ENCODE measurements at regions of chr10 and their contacts with region 1.

Region 1: DNA sequence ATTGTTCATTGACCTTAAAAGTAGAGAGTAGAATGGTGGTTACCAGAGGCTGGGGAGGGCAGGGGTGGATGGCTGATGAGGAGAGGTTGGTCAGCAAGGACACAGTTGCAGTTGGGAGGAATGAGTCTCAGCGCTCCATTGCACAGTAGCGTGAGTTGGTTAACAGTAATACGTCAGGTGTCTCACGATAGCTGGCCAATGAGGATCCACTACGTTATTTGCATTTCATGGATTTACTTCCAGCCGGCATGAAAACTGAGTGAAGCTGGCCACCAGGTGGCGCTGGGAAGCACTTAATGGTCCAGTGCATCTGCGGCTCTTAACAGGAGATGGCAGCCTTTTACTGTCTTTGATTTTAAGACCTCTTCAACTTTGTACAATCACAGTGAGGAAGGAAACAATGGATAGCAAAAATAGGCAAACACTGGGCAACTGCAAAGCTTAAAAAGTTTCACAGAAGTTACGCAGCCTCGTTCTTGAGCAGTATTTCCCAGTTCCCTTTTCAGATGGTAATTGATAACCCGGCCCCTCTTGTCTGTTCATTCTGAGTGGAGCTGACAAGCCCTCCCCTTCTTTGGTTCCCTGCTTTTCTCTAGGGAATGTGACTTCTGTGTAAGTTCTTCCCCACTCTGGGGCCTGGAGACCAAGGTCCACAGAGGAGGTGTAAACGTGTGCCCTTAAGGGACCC is 23.7 kb downstream of the AKR1E2 start:
- DNase-seq: peak; percentile 95
- H3K4me3 Mint-ChIP-seq: no peak overlapping the region
- H3K27ac Mint-ChIP-seq: peak overlapping the region; percentile 49
- H3K4me1 Mint-ChIP-seq: peaks cover 29% of the 10 kb centered on the region
- H3K27me3 Mint-ChIP-seq: no peaks in the 10 kb centered on the region
- CTCF ChIP-seq: peak; percentile 99

Region 2: DNA sequence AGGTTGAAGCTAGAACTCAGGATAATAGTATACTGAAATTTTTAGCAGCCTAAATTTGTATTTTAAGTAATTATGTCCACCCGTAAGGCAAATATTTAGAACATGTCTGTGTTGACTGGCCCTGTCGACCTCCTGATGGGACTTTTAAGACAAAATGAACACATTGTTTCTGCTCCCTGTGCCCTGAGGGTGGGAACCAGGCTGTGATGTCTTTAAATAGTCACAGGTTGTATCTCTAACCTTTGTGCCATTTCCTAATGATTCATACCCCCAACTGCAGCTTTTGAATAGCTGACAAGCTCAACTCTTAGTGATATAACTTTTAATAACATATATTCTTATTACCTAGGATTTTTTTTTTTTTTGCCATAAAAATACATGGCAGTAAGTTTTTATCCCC is 518.6 kb before region 1 on chr10:
- CTCF ChIA-PET with region 1: no interaction called
- POLR2A ChIA-PET with region 1: no interaction called
- intact Hi-C with region 1: no loop called
- DNase-seq: peak; percentile 33
- H3K4me3 Mint-ChIP-seq: no peak overlapping the region
- H3K27ac Mint-ChIP-seq: no peak overlapping the region
- H3K4me1 Mint-ChIP-seq: no peaks in the 10 kb centered on the region
- H3K27me3 Mint-ChIP-seq: no peaks in the 10 kb centered on the region
- CTCF ChIP-seq: no peak

Region 3: DNA sequence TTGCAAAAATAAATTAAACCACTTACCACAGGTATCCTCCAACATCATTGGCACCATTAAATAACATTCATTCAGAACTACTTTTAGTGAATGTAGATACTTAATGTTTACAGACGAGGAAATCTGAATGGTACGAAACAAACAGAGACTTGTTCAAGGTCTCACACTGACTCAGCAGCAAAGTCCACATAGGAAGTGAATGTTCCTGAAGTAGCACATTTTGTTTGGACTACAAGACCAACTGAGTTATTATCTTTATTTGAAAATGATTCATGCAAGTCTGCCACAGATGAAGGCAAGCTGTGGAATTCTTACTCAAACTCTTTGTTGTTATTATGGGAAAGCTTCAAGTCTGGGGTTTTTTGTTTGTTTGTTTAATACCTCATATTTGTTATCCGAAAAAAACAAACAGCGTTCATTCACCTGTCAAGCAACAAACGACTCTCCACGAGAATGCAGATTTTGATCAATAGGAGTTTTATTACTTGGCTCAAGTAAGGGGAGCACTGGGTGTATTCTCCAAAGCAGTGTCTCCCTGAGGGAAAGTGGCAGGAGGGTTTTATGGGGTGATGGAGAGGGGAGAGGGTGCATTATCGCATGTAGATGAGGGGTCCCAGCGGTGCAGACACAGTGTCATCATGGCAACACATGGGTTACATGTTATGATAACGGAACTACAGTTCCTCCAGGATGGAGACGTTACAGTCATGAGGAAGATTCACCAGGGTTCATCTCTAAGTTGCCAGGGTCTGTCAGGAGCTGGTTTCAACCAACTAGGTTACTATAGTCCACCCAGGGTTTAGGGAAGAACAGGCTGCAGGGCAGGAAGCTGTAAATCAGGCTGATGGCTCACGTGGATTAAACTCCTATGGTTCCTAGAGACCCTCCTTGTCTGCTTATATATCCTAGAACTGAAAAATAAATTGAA is 171.4 kb before region 1 on chr10:
- CTCF ChIA-PET with region 1: no interaction called
- POLR2A ChIA-PET with region 1: no interaction called
- intact Hi-C with region 1: no loop called
- DNase-seq: peak; percentile 81
- H3K4me3 Mint-ChIP-seq: peak overlapping the region; percentile 58
- H3K27ac Mint-ChIP-seq: peak overlapping the region; percentile 90
- H3K4me1 Mint-ChIP-seq: peaks cover 33% of the 10 kb centered on the region
- H3K27me3 Mint-ChIP-seq: no peaks in the 10 kb centered on the region
- CTCF ChIP-seq: no peak

Region 4: DNA sequence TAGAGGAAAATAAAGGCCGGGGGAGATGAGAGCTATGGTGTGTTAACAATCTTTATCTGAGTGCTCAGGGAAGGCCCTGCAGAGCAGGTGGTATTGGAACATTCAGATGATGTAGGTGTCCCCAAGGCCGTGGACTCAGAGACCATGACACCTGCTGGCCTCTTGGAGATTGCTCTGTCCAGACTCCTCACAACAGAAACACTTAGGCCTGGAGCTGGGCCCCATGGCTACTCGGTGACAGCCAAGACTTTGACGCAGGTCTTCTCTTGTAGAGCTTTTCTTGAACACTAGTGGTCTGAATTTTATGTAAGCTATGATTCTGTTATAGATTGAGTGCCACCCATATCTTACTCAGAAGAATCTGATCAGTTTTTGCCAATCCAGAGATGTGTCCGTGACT is 10.3 kb before region 1 on chr10:
- CTCF ChIA-PET with region 1: interaction called, 54 read pairs
- POLR2A ChIA-PET with region 1: interaction called, 4 read pairs
- intact Hi-C with region 1: no loop called
- DNase-seq: no peak
- H3K4me3 Mint-ChIP-seq: no peak overlapping the region
- H3K27ac Mint-ChIP-seq: no peak overlapping the region
- H3K4me1 Mint-ChIP-seq: no peaks in the 10 kb centered on the region
- H3K27me3 Mint-ChIP-seq: no peaks in the 10 kb centered on the region
- CTCF ChIP-seq: no peak

Region 5: GRCh38 chr10:4941540-4942330 is 92.0 kb after region 1 on chr10:
- CTCF ChIA-PET with region 1: interaction called, 17 read pairs
- POLR2A ChIA-PET with region 1: interaction called, 4 read pairs
- intact Hi-C with region 1: loop called (anchors 1 kb)
- DNase-seq: peak; percentile 59
- H3K4me3 Mint-ChIP-seq: no peak overlapping the region
- H3K27ac Mint-ChIP-seq: peak overlapping the region; percentile 80
- H3K4me1 Mint-ChIP-seq: peaks cover 75% of the 10 kb centered on the region
- H3K27me3 Mint-ChIP-seq: no peaks in the 10 kb centered on the region
- CTCF ChIP-seq: no peak

Region 6: DNA sequence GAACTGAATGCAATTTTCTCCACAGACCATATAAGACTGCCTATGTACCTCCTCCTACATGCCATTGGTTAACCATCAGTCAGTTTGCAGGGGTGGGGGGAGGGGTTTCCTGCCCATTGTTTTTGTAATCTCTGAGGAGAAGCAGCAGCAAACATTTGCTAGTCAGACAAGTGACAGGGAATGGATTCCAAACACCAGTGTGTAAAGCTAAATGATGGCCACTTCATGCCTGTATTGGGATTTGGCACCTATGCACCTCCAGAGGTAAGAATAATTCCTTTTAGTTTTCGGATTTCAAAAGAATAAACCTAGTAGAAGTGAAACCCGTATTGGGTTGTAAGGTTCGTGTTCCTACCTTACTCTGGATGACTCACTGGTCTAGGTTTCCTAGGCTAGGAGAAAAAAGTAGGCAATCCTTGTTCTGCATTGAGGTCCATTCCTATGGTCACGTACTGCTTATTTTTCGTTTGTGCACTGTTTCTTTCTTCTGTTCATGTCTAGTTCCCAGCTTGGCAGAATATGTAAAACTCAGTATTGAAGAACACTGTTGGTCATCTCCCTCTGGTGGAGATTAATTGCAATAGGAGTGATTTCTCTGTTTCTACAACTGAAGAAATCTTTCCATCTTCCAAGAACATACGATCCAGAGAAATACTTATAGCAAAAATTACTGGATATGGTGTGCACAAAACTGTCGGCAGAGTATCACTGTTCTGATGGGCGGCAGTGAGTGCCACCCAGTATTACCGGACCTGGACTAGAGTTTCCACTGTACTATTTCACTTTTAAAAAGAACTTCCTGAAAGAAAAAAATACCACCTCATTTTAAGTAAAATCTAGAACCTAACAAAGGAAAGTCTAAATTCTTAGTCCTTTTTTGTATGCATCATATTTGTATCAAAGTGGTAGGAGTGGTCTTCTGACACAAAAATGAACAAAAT is 244.8 kb after region 1 on chr10 and contains the start of gene AKR1C3:
- CTCF ChIA-PET with region 1: interaction called, 29 read pairs
- POLR2A ChIA-PET with region 1: interaction called, 26 read pairs
- intact Hi-C with region 1: loop called (anchors 1 kb)
- DNase-seq: peak; percentile 84
- H3K4me3 Mint-ChIP-seq: peak within 1 kb of the TSS; percentile 87
- H3K27ac Mint-ChIP-seq: peak within 1 kb of the TSS; percentile 88
- H3K4me1 Mint-ChIP-seq: peaks cover 20% of the 10 kb centered on the region
- H3K27me3 Mint-ChIP-seq: no peaks in the 10 kb centered on the region
- CTCF ChIP-seq: peak; percentile 43
- total RNA-seq, gene AKR1C3: 22.0 and 22.9 TPM in 2 replicates

Region 7: DNA sequence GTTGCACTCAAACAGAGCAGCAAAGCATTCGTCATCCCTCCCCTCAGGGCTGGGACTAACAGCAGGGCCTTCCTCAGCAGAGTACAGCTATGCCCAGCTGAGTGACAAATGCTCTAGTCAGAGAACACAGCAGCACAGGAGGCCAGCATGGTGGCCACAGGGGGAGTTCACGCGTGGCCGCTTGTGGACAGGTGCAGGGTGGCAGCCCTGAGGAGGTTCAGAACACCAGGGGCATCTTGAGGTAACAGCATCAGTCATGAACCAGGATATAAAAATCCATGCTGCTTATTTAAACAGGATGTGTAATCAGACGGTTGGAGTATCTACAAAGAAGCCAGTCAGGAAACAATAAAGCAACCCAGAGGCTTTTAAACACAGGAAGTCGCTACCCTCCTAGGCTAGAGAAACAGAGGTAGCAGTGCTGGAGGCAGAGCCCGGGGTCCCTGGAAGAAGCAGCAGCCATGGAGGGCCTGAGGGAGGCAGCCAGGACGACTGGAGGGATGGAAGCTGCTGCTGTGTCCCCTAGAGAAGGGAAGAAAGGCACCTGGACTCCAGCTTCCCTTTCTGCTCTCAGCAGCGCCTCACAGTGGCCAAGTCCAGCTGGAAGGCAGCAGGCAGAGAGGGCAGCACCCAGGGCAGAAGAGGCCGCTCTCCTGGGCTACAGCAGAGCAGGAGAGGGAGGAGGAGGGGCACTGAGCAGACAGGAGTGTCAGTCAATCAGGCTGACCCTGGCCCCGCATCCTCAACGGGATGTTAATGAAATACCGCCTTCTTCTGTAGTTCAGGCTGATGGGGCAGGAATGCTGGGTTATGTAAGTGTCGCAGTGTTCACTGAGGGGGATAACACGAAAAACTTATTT is 444.2 kb after region 1 on chr10:
- CTCF ChIA-PET with region 1: interaction called, 12 read pairs
- POLR2A ChIA-PET with region 1: no interaction called
- intact Hi-C with region 1: no loop called
- DNase-seq: peak; percentile 86
- H3K4me3 Mint-ChIP-seq: peak overlapping the region; percentile 48
- H3K27ac Mint-ChIP-seq: peak overlapping the region; percentile 96
- H3K4me1 Mint-ChIP-seq: peaks cover 50% of the 10 kb centered on the region
- H3K27me3 Mint-ChIP-seq: no peaks in the 10 kb centered on the region
- CTCF ChIP-seq: peak; percentile 39

Measured in MCF 10A (cell line).